GM10248 (cell line): ENCODE measurements at regions of chr14 and their contacts with region 1.

Region 1: DNA sequence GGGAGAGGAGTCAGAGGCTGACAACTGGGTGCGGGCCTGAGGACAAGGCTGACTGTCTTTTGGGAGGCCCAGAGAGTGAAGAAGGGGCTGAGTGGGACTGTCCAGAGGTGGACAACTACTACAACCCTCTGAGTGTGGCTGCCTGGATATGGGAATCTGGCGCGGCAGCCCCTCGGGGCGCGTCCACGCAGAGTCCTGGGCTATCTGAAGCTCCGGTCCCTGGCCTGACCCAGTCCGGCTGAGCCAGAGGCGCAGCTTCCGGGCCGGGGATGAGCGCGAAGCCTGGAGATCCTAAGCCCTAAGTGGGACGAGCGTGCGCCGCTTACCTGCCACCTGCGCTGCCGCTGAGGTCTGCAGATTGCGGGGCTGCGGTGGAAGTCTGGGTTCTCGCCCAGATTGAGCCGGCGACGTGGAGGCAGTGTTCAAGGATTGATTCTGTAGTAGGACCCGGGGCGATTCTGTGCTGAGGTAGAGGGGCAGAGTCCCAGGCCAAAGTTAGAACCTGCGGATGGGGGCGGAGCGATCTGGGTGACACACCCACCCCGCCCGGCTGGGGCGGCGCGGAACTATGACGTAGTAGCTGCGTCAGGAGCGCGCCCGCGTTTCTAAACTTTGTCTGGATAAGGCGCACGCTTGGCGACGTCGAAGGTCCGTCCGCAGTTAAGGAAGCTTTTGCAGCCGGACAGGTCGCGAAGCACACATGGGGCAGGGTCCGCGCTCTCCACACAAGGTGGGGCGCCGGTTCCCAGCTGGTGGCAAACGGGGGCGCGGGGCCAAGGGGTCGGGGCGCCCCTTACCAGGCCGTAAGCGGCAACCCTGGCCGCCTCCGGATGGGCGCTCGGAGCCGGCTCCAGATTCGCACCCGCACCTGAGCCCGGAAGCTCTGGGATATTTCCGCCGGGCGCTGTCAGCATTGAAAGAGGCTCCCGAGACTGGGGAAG is at the starts of genes DHRS1 and NOP9:
- DNase-seq: peak; percentile 96
- CTCF ChIP-seq: no peak

Region 2: GRCh38 chr14:24058260-24058950 is 241.1 kb before region 1 on chr14:
- CTCF ChIA-PET with region 1: interaction called, 10 read pairs
- POLR2A ChIA-PET with region 1: no interaction called
- DNase-seq: peak; percentile 70
- CTCF ChIP-seq: peak; percentile 73

Region 3: DNA sequence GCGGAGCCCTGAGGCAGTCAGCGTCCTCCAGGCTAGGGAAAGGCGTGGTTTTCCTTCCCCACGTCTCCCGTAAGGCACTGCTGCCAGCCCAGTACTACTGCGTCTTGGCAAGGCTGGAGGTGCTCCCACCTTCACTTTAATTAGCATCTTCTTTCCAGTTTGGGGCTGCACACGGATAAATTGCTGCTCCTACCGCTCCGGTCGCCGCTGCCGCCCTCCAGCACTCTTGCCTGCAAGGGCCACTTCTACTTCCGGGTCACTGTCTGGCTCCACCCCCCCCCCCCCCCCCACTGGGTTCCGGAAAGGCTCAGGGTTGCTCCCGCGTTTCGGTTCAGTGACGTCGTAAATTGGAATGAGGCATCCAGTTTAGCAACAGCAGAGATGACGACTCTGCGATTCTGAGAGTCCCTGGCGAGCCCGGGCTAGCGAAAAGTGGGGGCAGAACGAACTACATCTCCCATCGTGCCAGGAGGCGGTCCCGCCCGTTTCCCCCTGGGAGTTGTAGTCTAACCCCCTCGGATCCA is 67.3 kb before region 1 on chr14 and contains the start of gene NEDD8:
- CTCF ChIA-PET with region 1: interaction called, 56 read pairs
- POLR2A ChIA-PET with region 1: no interaction called
- DNase-seq: peak; percentile 89
- CTCF ChIP-seq: no peak

Region 4: DNA sequence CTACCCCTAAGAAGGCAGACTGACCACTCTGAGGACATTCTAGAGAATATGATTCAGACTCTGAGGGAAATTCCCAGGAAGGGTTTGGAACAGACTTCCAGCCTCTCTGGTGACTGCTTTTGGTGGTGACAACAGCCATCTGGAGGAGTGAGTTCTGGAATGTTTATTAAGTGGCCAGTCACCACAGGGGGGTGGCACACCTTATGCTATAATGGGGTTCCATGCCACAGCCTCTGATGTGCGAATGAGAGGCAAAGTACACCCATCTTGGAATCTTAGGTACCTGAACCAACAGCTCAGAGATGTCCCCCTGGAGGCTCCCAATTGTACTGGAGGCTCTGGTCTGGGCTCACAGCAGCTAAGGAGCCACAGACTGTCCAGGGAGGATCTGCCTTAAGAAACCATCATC is 47.6 kb before region 1 on chr14:
- CTCF ChIA-PET with region 1: interaction called, 323 read pairs
- POLR2A ChIA-PET with region 1: no interaction called
- DNase-seq: no peak
- CTCF ChIP-seq: no peak

Region 5: GRCh38 chr14:24271134-24271833 is 28.2 kb before region 1 on chr14 and contains the start of gene RABGGTA:
- CTCF ChIA-PET with region 1: interaction called, 68 read pairs
- POLR2A ChIA-PET with region 1: interaction called, 9 read pairs
- DNase-seq: peak; percentile 96
- CTCF ChIP-seq: peak; percentile 88

Region 6: DNA sequence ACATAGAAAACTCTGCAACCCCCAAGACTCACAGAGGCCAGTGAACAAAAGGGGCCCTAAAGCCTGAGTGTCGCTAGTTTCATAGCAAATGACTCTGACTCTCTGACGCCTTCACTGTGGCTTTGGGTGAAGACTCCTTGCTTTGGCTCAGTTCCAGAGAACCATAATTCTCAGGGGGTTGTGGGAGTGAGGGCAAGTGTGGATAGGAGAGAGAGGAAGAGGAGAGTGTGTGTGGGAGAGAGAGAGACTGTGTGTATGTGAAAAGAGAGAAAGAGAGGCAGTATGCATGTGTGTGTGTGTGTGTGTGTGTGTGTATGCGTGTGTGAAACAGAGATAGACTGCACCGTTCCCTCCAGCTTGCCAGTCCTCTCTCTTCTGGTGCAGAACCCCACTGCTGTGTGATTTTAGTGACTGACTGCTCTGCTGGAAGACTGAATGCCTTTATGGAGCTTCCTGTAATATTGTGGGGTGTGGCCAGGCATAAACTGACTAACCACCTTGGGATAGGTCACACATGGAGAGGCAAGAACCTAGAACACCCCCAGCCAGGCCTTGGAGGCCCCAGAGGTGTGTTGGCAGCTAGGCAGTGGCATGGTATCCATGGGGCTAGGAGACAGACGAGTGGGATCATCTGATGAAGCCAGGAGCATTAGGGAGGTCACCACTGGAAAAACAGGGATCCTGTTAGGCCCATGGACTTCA is 796.4 kb after region 1 on chr14:
- CTCF ChIA-PET with region 1: no interaction called
- POLR2A ChIA-PET with region 1: no interaction called
- DNase-seq: no peak
- CTCF ChIP-seq: no peak